PC-9 (cell line): ENCODE measurements at regions of chr5 and their contacts with region 1.

Region 1: GRCh38 chr5:142915813-142916424 is 145.7 kb downstream of the ARHGAP26 start:
- DNase-seq: peak in 1 of 2 experiments; percentile 40
- H3K4me3 ChIP-seq: no peak overlapping the region
- H3K27ac ChIP-seq: no peak overlapping the region
- H3K4me1 ChIP-seq: peaks cover 25% of the 10 kb centered on the region
- H3K27me3 ChIP-seq: no peaks in the 10 kb centered on the region
- CTCF ChIP-seq: peak; percentile 72

Region 2: GRCh38 chr5:142900927-142901326 is 15.0 kb before region 1 on chr5:
- CTCF ChIA-PET with region 1: interaction called, 5 read pairs
- POLR2A ChIA-PET with region 1: interaction called, 8 read pairs
- intact Hi-C with region 1: loop called (anchors 2 kb)
- DNase-seq: peak; percentile 42 to 83
- H3K4me3 ChIP-seq: no peak overlapping the region
- H3K27ac ChIP-seq: no peak overlapping the region
- H3K4me1 ChIP-seq: peaks cover 46% of the 10 kb centered on the region
- H3K27me3 ChIP-seq: no peaks in the 10 kb centered on the region
- CTCF ChIP-seq: no peak

Region 3: DNA sequence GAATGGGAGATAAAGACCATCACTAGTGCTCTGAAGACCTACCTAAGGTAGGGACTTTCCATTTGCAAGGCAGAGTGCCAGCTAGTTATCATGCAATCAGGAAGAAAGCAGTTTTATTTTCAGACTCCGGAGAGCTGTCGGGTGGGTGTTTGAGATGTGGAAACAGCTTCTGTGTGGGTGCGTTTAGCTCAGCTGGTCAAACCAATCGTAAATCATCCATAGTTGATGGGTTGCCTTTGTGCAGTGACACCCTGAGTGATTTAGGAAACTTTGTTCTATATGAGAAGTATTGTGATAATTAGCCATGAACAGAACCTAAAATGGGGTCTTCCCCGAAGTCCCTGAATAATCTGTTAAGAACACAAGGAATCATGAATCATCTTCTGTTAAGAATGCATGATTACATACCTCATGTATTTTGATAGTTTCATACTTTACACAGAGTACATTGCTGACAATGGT is 138.6 kb after region 1 on chr5:
- CTCF ChIA-PET with region 1: no interaction called
- POLR2A ChIA-PET with region 1: no interaction called
- intact Hi-C with region 1: no loop called
- DNase-seq: no peak
- H3K4me3 ChIP-seq: no peak overlapping the region
- H3K27ac ChIP-seq: no peak overlapping the region
- H3K4me1 ChIP-seq: peaks cover 13% of the 10 kb centered on the region
- H3K27me3 ChIP-seq: no peaks in the 10 kb centered on the region
- CTCF ChIP-seq: no peak